PC-3 (cell line): ENCODE measurements at regions of chr1 and their contacts with region 1.

Region 1: GRCh38 chr1:24319312-24319863 is at the start of gene GRHL3:
- DNase-seq: peak; percentile 75
- ATAC-seq: peak; percentile 57
- H3K4me3 ChIP-seq: peak within 1 kb of the TSS; percentile 61
- H3K27ac ChIP-seq: peak within 1 kb of the TSS; percentile 55
- H3K4me1 ChIP-seq: peaks cover 72% of the 10 kb centered on the region
- H3K27me3 ChIP-seq: no peaks in the 10 kb centered on the region
- CTCF ChIP-seq: no peak
- total RNA-seq, gene GRHL3: 3.5 and 7.8 TPM in 2 replicates

Region 2: GRCh38 chr1:24228311-24228710 is 91.1 kb before region 1 on chr1:
- CTCF ChIA-PET with region 1: no interaction called
- POLR2A ChIA-PET with region 1: no interaction called
- intact Hi-C with region 1: no loop called
- DNase-seq: no peak
- ATAC-seq: no peak
- H3K4me3 ChIP-seq: no peak overlapping the region
- H3K27ac ChIP-seq: no peak overlapping the region
- H3K4me1 ChIP-seq: no peaks in the 10 kb centered on the region
- H3K27me3 ChIP-seq: no peaks in the 10 kb centered on the region
- CTCF ChIP-seq: no peak

Region 3: GRCh38 chr1:24289937-24290595 is 29.3 kb before region 1 on chr1:
- CTCF ChIA-PET with region 1: interaction called, 14 read pairs
- POLR2A ChIA-PET with region 1: no interaction called
- intact Hi-C with region 1: no loop called
- DNase-seq: peak; percentile 95
- ATAC-seq: peak; percentile 57
- H3K4me3 ChIP-seq: no peak overlapping the region
- H3K27ac ChIP-seq: peak overlapping the region; percentile 76
- H3K4me1 ChIP-seq: peaks cover 62% of the 10 kb centered on the region
- H3K27me3 ChIP-seq: no peaks in the 10 kb centered on the region
- CTCF ChIP-seq: no peak

Region 4: DNA sequence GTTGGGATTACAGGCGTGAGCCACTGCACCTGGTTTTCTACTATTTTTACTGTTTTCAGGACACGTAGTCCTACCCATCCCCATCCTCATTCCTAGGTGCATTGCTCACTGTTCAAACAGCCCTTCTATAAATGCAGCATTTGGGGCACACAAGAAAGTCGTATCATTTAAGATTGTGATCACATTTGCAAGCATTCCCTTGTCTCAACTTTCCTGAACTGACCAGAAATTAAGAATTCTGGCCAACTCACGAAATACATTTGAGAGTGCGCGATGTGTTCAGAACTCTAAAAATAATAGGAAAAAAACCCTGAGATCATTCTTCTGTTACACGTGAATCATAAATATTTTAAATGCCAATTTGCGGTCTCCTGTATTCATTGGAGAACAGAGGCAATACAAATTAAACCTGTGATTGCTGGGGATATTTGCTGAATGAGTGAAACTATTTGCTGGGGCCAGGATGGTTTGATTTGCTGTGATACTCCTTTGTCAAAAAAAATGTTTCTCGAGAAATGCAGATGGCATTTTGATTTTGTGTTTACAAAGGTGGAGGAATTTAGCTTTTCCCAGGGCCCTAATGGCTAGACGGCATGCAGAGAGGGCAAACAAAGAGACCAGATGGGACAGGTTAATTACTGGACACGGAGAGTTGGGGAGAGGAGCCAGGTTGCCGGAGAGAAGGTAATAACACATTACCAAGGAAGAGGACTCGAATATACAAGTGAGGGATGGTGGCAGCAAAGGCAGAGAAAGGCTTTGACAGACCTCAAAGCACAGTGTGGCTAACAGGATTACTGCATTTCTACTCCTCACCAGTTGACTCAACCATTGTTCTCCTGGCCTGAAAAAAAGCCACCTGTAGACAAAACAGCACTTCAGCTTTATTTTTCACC is 55.8 kb after region 1 on chr1:
- CTCF ChIA-PET with region 1: no interaction called
- POLR2A ChIA-PET with region 1: interaction called, 22 read pairs
- intact Hi-C with region 1: no loop called
- DNase-seq: peak; percentile 92
- ATAC-seq: peak; percentile 90
- H3K4me3 ChIP-seq: peak overlapping the region; percentile 46
- H3K27ac ChIP-seq: peak overlapping the region; percentile 96
- H3K4me1 ChIP-seq: peaks cover 38% of the 10 kb centered on the region
- H3K27me3 ChIP-seq: no peaks in the 10 kb centered on the region
- CTCF ChIP-seq: no peak

Region 5: GRCh38 chr1:25223471-25223870 is 904.1 kb after region 1 on chr1:
- CTCF ChIA-PET with region 1: no interaction called
- POLR2A ChIA-PET with region 1: no interaction called
- intact Hi-C with region 1: no loop called
- DNase-seq: peak; percentile 6
- ATAC-seq: peak; percentile 27; the same call in 1 of the 2 replicates
- H3K4me3 ChIP-seq: no peak overlapping the region
- H3K27ac ChIP-seq: no peak overlapping the region
- H3K4me1 ChIP-seq: 0 out of 2 replicates have a peak, but pooled peaks cover 5% of the 10 kb centered on the region
- H3K27me3 ChIP-seq: no peaks in the 10 kb centered on the region
- CTCF ChIP-seq: no peak